MCF 10A (cell line): ENCODE measurements at regions of chr5 and their contacts with region 1.

Region 1: GRCh38 chr5:119328753-119329602 is 26.8 kb upstream of the TNFAIP8 start:
- DNase-seq: peak; percentile 54
- H3K4me3 Mint-ChIP-seq: no peak overlapping the region
- H3K27ac Mint-ChIP-seq: peak overlapping the region; percentile 65
- H3K4me1 Mint-ChIP-seq: peaks cover 55% of the 10 kb centered on the region
- H3K27me3 Mint-ChIP-seq: no peaks in the 10 kb centered on the region
- CTCF ChIP-seq: no peak

Region 2: GRCh38 chr5:118723021-118723338 is 606.0 kb before region 1 on chr5:
- CTCF ChIA-PET with region 1: no interaction called
- POLR2A ChIA-PET with region 1: no interaction called
- intact Hi-C with region 1: no loop called
- DNase-seq: no peak
- H3K4me3 Mint-ChIP-seq: no peak overlapping the region
- H3K27ac Mint-ChIP-seq: no peak overlapping the region
- H3K4me1 Mint-ChIP-seq: no peaks in the 10 kb centered on the region
- H3K27me3 Mint-ChIP-seq: no peaks in the 10 kb centered on the region
- CTCF ChIP-seq: no peak

Region 3: GRCh38 chr5:118987988-118988865 is 340.8 kb before region 1 on chr5 and contains the start of gene DTWD2:
- CTCF ChIA-PET with region 1: interaction called, 8 read pairs
- POLR2A ChIA-PET with region 1: interaction called, 18 read pairs
- intact Hi-C with region 1: no loop called
- DNase-seq: peak; percentile 96
- H3K4me3 Mint-ChIP-seq: peak within 1 kb of the TSS; percentile 82
- H3K27ac Mint-ChIP-seq: peak within 1 kb of the TSS; percentile 73
- H3K4me1 Mint-ChIP-seq: peaks cover 34% of the 10 kb centered on the region
- H3K27me3 Mint-ChIP-seq: no peaks in the 10 kb centered on the region
- CTCF ChIP-seq: peak; percentile 86
- total RNA-seq, gene DTWD2: 10.1 and 10.5 TPM in 2 replicates

Region 4: DNA sequence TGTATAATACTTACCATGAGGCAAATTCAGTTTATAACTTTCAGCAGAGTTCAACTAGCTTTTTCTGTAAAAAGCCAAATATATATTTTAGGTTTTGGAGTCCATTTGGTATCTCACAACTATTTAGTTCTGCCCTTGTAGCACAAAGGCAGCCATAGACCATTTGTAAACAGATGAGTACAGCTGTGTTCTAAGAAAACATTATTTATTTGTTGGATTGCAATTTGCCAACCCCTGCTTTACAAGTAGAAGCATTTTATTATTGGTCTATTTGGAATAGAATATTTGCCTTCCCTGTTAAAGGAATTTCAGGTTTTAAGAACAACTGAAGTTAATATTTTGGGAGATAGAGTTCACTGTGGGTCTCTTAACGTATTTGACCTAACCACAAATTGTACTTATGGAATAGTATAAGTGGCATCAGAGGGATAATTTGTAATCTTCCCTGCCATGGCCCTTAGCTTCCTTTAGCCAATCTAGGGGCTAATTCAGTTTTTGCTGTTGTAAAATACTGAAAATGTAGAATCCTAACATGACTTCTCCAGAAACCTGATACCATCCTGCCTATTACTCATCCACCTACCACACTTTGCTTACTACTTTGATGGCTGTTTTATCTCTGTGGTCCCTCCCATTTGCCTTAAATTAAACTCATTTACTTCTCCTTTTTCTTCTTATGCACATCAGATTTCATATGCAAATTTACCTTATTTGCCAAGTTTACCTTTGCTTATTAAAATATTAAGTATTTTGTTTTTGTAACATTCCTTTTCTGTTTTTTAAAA is 148.9 kb before region 1 on chr5:
- CTCF ChIA-PET with region 1: interaction called, 3 read pairs
- POLR2A ChIA-PET with region 1: no interaction called
- intact Hi-C with region 1: loop called (anchors 10 kb)
- DNase-seq: peak; percentile 4
- H3K4me3 Mint-ChIP-seq: no peak overlapping the region
- H3K27ac Mint-ChIP-seq: no peak overlapping the region
- H3K4me1 Mint-ChIP-seq: peaks cover 5% of the 10 kb centered on the region
- H3K27me3 Mint-ChIP-seq: no peaks in the 10 kb centered on the region
- CTCF ChIP-seq: no peak

Region 5: DNA sequence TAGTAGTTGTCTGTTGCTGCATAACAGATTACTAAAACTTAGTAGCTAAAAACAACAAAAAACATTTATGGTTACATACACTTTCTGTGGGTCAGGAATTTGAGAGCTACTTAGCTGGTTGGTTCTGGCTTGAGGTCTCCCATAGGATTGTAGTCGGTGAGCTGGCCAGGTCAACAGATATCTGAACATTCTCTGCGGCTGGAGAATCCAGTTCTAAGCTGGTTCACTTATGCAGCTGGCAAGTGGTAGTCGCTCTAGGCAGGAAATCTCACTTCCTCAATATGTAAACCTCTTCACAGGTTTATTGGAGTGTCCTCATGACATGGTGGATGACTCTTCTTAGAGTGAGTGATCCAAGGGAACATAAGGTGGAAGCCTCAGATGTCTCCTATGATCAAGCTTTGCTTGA is 38.8 kb before region 1 on chr5:
- CTCF ChIA-PET with region 1: interaction called, 20 read pairs
- POLR2A ChIA-PET with region 1: interaction called, 29 read pairs
- intact Hi-C with region 1: no loop called
- DNase-seq: no peak
- H3K4me3 Mint-ChIP-seq: no peak overlapping the region
- H3K27ac Mint-ChIP-seq: no peak overlapping the region
- H3K4me1 Mint-ChIP-seq: peaks cover 42% of the 10 kb centered on the region
- H3K27me3 Mint-ChIP-seq: no peaks in the 10 kb centered on the region
- CTCF ChIP-seq: no peak

Region 6: GRCh38 chr5:119315516-119315949 is 13.4 kb before region 1 on chr5:
- CTCF ChIA-PET with region 1: interaction called, 88 read pairs
- POLR2A ChIA-PET with region 1: interaction called, 23 read pairs
- intact Hi-C with region 1: loop called (anchors 1 kb)
- DNase-seq: peak; percentile 82
- H3K4me3 Mint-ChIP-seq: no peak overlapping the region
- H3K27ac Mint-ChIP-seq: no peak overlapping the region
- H3K4me1 Mint-ChIP-seq: no peaks in the 10 kb centered on the region
- H3K27me3 Mint-ChIP-seq: no peaks in the 10 kb centered on the region
- CTCF ChIP-seq: peak; percentile 39

Region 7: DNA sequence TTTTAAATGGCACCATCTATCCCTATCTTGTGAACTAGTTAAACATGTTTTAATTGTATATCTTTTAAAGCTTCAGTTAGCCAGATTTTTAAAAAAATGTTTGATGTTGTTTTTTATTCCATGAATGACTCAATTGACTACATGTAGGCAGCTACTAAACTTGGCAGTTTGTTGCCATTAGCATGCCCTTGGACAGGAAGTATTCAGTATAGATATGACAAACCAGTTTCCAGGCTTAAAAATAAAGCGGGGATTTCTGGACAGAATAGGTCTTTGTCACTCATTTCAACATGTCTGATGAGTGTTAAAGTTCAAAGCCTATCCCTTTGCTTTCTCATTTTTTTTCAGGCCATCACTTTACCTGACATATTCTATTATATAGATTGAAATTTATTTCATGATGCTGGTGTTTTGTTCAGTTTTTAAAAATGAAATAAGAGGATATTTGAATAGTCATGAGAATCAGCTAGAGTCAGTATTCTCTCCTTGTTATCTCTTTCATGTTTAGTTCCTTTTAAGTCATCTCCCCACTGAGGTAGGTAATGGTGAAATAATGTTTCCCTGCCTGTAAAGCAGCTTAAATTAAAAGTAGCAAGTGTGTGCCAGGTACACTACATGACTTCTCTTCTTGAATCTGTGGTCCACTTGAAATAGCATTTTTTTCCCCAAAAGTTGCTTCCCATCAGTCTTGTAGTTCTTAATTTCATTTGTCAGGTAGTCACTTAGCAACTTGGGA is 38.7 kb after region 1 on chr5:
- CTCF ChIA-PET with region 1: interaction called, 161 read pairs
- POLR2A ChIA-PET with region 1: interaction called, 385 read pairs
- intact Hi-C with region 1: no loop called
- DNase-seq: peak; percentile 81
- H3K4me3 Mint-ChIP-seq: peak overlapping the region; percentile 45
- H3K27ac Mint-ChIP-seq: peak overlapping the region; percentile 90
- H3K4me1 Mint-ChIP-seq: peaks cover 47% of the 10 kb centered on the region
- H3K27me3 Mint-ChIP-seq: no peaks in the 10 kb centered on the region
- CTCF ChIP-seq: no peak

Region 8: GRCh38 chr5:119418531-119419116 is 89.6 kb after region 1 on chr5:
- CTCF ChIA-PET with region 1: interaction called, 253 read pairs
- POLR2A ChIA-PET with region 1: interaction called, 72 read pairs
- intact Hi-C with region 1: no loop called
- DNase-seq: no peak
- H3K4me3 Mint-ChIP-seq: no peak overlapping the region
- H3K27ac Mint-ChIP-seq: no peak overlapping the region
- H3K4me1 Mint-ChIP-seq: peaks cover 32% of the 10 kb centered on the region
- H3K27me3 Mint-ChIP-seq: no peaks in the 10 kb centered on the region
- CTCF ChIP-seq: no peak